ENCODE measurements at regions of chr13 and their contacts with region 1.

Region 1: DNA sequence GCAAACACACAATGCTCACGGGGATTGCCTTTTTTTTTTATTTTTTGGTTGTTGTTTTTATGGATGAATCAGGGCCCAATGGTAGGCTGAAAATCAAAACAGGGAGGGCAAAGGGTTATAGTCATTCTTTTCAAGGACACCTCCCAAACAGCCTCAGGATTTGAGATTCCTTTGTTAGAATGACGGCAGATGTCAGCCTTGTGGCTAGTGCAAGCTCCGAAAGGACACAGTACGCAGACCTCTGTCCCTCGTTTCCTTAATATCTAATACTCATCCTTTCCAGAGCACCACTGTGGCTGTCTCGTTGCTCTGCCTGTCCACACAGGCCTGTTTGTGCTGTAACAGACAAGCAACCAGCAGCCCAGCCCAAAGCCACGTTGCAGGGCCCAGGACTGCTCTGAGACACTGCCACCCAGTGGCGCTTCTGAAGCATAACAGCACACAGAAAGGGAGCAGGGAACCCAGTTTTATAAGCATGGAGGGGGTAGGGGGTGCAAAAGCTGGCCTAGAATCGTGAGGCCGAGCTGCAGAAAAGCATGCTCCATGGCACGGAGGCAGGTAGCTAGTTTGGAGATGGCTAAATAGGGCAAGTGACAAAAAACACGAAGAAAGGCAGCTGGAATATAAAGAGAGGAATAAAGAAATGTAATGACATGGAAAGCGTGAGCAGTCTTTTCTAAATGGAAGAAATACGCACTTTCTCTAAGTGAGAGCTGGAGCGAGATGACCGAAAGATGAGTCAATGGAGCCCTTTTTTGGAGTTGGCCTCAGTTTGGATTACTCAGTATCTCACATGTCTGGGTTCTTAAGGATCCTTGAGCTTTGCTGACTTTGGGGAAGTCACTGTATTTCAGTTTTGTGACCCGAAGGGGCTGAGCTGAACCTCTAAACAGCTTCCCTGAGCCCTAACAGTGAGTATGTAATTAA is 40.7 kb upstream of the MEDAG start:
- DNase-seq: peak; percentile 89
- H3K4me3 ChIP-seq: no peak overlapping the region
- H3K27ac ChIP-seq: peak overlapping the region; percentile 76
- H3K4me1 ChIP-seq: peaks cover 37% of the 10 kb centered on the region
- H3K27me3 ChIP-seq: no peaks in the 10 kb centered on the region
- CTCF ChIP-seq: peak; percentile 96 to 97

Region 2: GRCh38 chr13:30465585-30466357 is 399.6 kb before region 1 on chr13 and contains the start of gene HMGB1:
- CTCF ChIA-PET with region 1: no interaction called
- dilution Hi-C with region 1: no loop called
- in situ Hi-C with region 1: no loop called
- intact Hi-C with region 1: loop called (anchors 5 kb)
- DNase-seq: peak; percentile 99
- H3K4me3 ChIP-seq: peak within 1 kb of the TSS; percentile 54 to 76 (median 58)
- H3K27ac ChIP-seq: peak within 1 kb of the TSS; percentile 89
- H3K4me1 ChIP-seq: peaks cover 23% of the 10 kb centered on the region
- H3K27me3 ChIP-seq: no peaks in the 10 kb centered on the region
- CTCF ChIP-seq: no peak
- total RNA-seq, gene HMGB1: 78.0 to 273 TPM

Region 3: GRCh38 chr13:30629527-30629926 is 235.9 kb before region 1 on chr13:
- CTCF ChIA-PET with region 1: no interaction called
- dilution Hi-C with region 1: no loop called
- in situ Hi-C with region 1: no loop called
- intact Hi-C with region 1: no loop called
- DNase-seq: no peak
- H3K4me3 ChIP-seq: no peak overlapping the region
- H3K27ac ChIP-seq: no peak overlapping the region
- H3K4me1 ChIP-seq: no peaks in the 10 kb centered on the region
- H3K27me3 ChIP-seq: no peaks in the 10 kb centered on the region
- CTCF ChIP-seq: no peak

Region 4: GRCh38 chr13:30673669-30674521 is 191.5 kb before region 1 on chr13:
- CTCF ChIA-PET with region 1: no interaction called
- dilution Hi-C with region 1: no loop called
- in situ Hi-C with region 1: no loop called
- intact Hi-C with region 1: loop called (anchors 1 kb)
- DNase-seq: peak; percentile 81
- H3K4me3 ChIP-seq: peak overlapping the region; percentile 23 to 56 (median 52)
- H3K27ac ChIP-seq: no peak overlapping the region
- H3K4me1 ChIP-seq: peaks cover 9% of the 10 kb centered on the region
- H3K27me3 ChIP-seq: no peaks in the 10 kb centered on the region
- CTCF ChIP-seq: peak; percentile 37 to 49

Region 5: GRCh38 chr13:30702006-30702405 is 163.4 kb before region 1 on chr13:
- CTCF ChIA-PET with region 1: no interaction called
- dilution Hi-C with region 1: no loop called
- in situ Hi-C with region 1: no loop called
- intact Hi-C with region 1: no loop called
- DNase-seq: no peak
- H3K4me3 ChIP-seq: no peak overlapping the region
- H3K27ac ChIP-seq: no peak overlapping the region
- H3K4me1 ChIP-seq: peaks cover 3% of the 10 kb centered on the region
- H3K27me3 ChIP-seq: no peaks in the 10 kb centered on the region
- CTCF ChIP-seq: no peak

Region 6: GRCh38 chr13:30739761-30740642 is 125.4 kb before region 1 on chr13:
- CTCF ChIA-PET with region 1: no interaction called
- dilution Hi-C with region 1: no loop called
- in situ Hi-C with region 1: no loop called
- intact Hi-C with region 1: loop called (anchors 1 kb)
- DNase-seq: peak; percentile 92
- H3K4me3 ChIP-seq: no peak overlapping the region
- H3K27ac ChIP-seq: peak overlapping the region; percentile 54
- H3K4me1 ChIP-seq: peaks cover 45% of the 10 kb centered on the region
- H3K27me3 ChIP-seq: no peaks in the 10 kb centered on the region
- CTCF ChIP-seq: no peak

Region 7: DNA sequence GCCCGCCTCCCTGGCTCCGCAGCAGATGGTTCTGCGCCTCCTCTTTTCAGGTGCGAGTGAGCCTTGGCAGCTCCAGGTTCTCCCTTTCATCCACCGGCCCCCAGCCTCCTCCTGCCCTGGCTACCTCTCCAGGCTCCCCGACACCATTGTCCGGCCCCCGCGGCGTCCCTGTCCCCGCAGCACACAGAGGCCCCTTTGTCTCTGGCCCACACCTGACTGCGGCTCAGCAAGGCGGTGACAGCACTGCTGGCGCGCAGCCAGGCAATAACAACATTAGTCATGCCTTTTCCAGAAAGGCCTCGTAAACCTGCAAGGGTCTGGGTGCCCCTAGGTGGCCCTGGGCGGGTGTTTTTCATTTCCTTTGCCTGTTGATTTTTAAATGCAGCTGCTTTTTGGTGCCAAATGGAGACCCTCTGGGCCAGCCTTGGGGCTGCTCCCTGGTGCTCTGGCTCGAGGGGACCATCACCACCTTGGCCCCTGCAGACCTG is 32.5 kb before region 1 on chr13:
- CTCF ChIA-PET with region 1: no interaction called
- dilution Hi-C with region 1: no loop called
- in situ Hi-C with region 1: no loop called
- intact Hi-C with region 1: loop called (anchors 1 kb)
- DNase-seq: peak; percentile 93
- H3K4me3 ChIP-seq: no peak overlapping the region
- H3K27ac ChIP-seq: peak overlapping the region; percentile 45
- H3K4me1 ChIP-seq: peaks cover 59% of the 10 kb centered on the region
- H3K27me3 ChIP-seq: no peaks in the 10 kb centered on the region
- CTCF ChIP-seq: peak in 1 of 2 donors; percentile 4

Region 8: GRCh38 chr13:31073859-31074718 is 208.7 kb after region 1 on chr13:
- CTCF ChIA-PET with region 1: no interaction called
- dilution Hi-C with region 1: no loop called
- in situ Hi-C with region 1: no loop called
- intact Hi-C with region 1: no loop called
- DNase-seq: peak; percentile 41
- H3K4me3 ChIP-seq: no peak overlapping the region
- H3K27ac ChIP-seq: no peak overlapping the region
- H3K4me1 ChIP-seq: no peaks in the 10 kb centered on the region
- H3K27me3 ChIP-seq: no peaks in the 10 kb centered on the region
- CTCF ChIP-seq: no peak

Region 9: DNA sequence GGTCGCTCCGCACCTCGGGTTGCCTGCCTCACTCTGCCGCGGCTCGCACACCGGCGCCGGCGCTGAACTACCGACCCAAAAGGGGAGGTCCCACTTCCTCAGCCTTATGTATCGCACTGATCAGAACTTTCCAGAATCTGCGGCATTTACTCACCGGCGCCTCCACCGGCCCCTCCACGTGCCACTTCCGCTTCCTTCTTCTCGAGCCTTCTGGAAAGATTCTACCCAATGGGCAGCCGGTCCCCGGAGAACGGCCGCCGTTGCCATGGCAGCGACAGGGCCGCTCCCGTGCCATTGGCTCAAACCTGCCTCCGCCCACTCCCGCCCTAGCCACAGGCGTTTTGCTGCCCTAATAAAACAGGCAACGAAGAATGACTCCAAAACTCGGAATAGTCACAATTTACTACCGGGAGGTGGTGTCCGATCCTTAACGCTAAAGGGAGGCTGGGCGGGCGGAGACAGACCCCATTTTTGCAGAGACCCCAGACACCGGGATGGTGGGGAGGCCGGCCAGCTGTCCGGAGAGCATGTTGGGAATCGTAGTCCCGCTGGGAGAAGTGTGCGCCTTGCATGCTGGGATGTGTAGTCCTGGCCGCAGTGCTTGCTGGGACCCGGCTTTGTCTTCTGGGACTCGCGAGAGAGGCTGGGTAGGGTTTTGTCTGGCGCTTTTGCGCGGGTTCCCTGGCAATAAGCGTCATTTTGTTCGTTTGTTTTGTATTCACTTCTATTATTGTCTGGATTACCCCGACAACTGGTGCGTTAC is 296.6 kb after region 1 on chr13 and contains the start of gene HSPH1:
- CTCF ChIA-PET with region 1: no interaction called
- dilution Hi-C with region 1: no loop called
- in situ Hi-C with region 1: no loop called
- intact Hi-C with region 1: loop called (anchors 5 kb)
- DNase-seq: peak; percentile 99
- H3K4me3 ChIP-seq: peak within 1 kb of the TSS; percentile 81 to 90 (median 84)
- H3K27ac ChIP-seq: peak within 1 kb of the TSS; percentile 97
- H3K4me1 ChIP-seq: peaks cover 7% of the 10 kb centered on the region
- H3K27me3 ChIP-seq: no peaks in the 10 kb centered on the region
- CTCF ChIP-seq: peak in 1 of 2 donors; percentile 35
- total RNA-seq, gene HSPH1: 49.0 to 113 TPM